Heart right ventricle (tissue), 16 donors: ENCODE measurements at regions of chr12 and their contacts with region 1.

Region 1: DNA sequence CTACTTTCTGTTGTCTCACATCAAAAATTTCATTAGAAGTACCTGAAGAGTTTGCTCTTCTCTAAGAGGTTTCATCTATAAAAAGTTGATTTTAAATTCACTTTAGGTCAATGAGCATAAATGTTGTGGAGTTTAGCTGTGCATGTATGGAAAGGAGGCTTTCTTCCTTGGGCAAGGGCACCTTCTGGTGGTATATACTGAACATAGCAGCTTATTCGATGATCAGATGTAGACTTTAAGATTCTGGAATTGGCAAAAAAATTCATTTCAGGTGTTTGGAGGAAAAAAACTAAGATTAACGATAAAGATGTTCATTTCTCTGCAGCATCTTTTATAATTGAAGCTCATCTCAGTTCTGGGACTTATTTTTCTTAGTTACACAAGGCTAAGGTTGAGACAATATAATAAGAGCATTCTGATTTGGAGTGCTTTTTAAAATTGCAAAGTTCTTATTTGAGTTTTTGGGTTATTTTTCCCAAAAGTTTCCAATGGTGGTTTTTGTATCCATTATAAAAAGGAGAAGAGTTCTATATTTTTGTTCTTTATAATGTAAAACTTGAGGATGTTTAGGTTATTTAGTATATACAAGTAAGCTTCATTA is 46.8 kb downstream of the TMEM117 start:
- DNase-seq: no peak
- ATAC-seq: peak in 5 of 8 donors; percentile 52 to 70 (median 64)
- H3K4me3 ChIP-seq: no peak overlapping the region
- H3K27ac ChIP-seq: no peak overlapping the region
- H3K4me1 ChIP-seq: peaks cover 0 to 11% (median 0%) of the 10 kb centered on the region in 9 donors
- H3K27me3 ChIP-seq: no peaks in the 10 kb centered on the region
- CTCF ChIP-seq: peak; percentile 34 to 90 (median 79)

Region 2: DNA sequence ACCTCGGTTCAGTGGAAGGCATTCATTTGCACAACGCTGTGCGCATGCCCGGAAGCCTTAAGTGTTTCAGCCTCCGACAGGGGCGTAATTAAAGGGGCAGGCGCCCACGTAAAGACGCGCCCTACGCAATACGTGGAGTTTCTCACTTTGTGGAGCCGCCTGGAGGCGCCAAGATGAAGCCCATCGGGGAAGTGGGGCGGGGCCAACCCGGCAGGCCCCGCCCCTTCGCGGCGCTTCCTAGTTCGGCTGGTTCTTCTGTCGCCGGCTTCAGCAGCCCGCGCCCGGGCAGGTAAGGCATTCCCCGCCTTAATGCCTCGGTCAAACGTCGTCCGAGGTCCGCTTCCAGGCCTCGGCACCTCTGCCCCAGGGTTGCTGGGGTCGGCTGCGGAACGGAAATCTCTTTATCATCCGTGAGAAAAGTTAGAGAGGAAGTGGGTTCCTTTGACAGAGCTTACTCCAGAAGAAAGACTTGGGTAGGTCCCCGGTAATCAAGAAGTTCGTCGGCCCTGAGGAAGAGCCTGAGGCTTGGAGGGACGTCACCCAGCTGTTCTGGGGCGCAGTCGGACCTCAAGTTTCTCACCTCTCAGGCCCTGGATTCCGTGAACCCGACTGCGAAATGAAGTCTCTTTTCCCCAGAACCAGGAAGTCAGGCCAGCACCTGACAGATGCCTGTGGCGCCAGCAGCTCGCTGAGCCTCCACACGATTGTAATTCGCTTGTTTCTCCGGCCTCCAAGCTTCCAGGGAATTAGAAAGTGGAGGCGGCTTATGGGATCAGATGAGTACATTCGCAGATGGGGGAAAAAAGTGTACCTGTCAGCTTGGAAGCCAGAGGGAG is 123.7 kb before region 1 on chr12 and contains the starts of genes IRAK4 and PUS7L:
- intact Hi-C with region 1: loop called in 2 of 10 experiments (anchors 5 kb)
- DNase-seq: peak; percentile 93 to 94
- ATAC-seq: peak; percentile 99 to 100 (median 100)
- H3K4me3 ChIP-seq: peak within 1 kb of the TSS; percentile 56 to 93 (median 78)
- H3K27ac ChIP-seq: peak within 1 kb of the TSS in 9 of 10 donors; percentile 76 to 94 (median 88)
- H3K4me1 ChIP-seq: peaks cover 4 to 52% (median 26%) of the 10 kb centered on the region in 9 donors
- H3K27me3 ChIP-seq: no peaks in the 10 kb centered on the region
- CTCF ChIP-seq: peak in 8 of 9 donors; percentile 29 to 71 (median 52)
- total RNA-seq, gene IRAK4: 3.6 to 8.1 (median 4.1) TPM
- total RNA-seq, gene PUS7L: 4.1 to 7.8 (median 5.2) TPM

Region 3: DNA sequence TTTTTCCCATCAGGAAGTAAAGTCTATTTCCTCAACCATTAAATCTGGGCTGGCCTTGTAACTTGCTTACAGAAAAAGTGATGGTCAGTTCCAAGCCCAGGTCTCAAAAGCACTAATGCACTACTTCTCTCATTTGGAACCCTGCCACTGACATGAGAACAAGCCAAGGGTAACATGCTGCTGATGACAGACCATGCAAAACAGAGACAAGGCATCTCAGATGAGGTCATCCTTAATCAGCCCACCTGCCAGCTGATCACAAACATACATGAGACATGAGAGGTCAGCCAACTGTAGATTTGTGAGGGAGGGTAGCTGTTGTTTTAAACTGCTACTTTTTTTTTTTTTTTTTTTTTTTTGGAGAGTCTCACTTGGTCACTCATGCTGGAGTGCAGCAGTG is 92.7 kb before region 1 on chr12:
- intact Hi-C with region 1: loop called in 1 of 10 experiments (anchors 10 kb)
- DNase-seq: peak in 1 of 2 donors; percentile 11
- ATAC-seq: peak in 3 of 8 donors; percentile 33 to 51 (median 38)
- H3K4me3 ChIP-seq: no peak overlapping the region
- H3K27ac ChIP-seq: no peak overlapping the region
- H3K4me1 ChIP-seq: peaks cover 0 to 7% (median 0%) of the 10 kb centered on the region in 9 donors
- H3K27me3 ChIP-seq: no peaks in the 10 kb centered on the region
- CTCF ChIP-seq: no peak

Region 4: DNA sequence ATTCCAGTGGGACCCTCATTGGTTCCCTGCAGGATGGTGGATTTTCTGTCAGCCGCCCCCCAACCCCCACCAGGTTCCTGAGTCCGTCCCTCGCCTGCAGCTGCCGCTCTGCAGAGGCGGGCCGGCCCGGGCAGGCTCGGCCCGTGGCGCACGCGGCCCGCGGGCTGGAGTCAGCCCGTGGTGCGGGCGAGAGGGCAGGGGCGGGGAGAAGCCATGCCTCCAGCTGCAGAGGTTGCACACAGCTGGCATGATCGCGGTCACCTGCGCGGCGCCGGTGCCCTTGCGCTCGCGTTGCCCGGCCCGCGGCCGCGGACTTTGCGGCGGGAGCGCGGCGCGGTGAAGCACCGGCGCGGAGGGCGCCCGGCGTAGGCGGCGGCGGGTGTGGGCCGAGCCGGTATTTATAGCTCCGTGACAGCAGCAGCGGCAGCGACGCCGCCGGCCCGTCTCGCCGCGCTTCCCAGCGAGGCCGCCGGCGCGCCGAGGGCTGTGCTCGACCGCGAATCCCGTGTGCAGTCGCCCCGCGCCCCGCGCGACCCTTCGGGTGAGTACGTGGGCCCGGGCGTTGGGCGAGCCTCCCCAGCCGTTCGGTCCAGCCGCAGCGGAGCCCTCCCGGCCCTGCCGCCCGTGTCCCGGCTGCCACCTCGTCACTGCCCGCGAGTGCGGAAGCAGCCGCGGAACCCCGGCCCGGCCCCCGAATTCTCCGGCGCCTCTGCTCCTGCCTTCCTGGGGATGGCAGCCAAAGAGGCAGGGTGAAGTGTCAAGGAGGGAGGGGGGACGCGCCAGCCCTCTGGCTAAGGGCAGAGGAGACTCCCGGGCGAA is 46.8 kb before region 1 on chr12 and contains the start of gene TMEM117:
- intact Hi-C with region 1: loop called in 1 of 10 experiments (anchors 5 kb)
- DNase-seq: peak; percentile 80 to 86
- ATAC-seq: peak; percentile 93 to 96 (median 94)
- H3K4me3 ChIP-seq: peak within 1 kb of the TSS; percentile 40 to 86 (median 77)
- H3K27ac ChIP-seq: peak within 1 kb of the TSS; percentile 93 to 98 (median 95)
- H3K4me1 ChIP-seq: peaks cover 0 to 28% (median 19%) of the 10 kb centered on the region in 9 donors
- H3K27me3 ChIP-seq: no peaks in the 10 kb centered on the region
- CTCF ChIP-seq: no peak
- total RNA-seq, gene TMEM117: 5.9 to 8.5 (median 7.1) TPM

Region 5: DNA sequence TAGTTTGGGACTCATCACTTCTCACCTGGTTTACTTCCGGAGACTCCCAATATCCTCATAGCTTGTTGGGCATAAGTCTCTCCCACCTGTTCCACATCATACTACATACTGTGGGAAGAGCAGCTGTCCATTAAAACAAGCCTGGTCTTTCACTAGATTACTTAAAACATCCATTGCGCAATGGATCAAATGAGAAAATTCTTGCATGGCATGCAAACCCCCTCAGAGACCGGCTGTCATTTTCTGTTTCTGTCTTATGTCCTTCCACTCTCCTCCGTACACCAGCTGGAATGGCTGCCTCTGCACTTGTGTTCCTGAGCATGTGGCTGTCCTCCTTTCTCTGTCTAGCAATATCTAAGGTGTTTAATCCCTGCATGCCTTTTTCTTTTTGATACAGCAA is 218.8 kb after region 1 on chr12:
- intact Hi-C with region 1: no loop called
- DNase-seq: no peak
- ATAC-seq: no peak
- H3K4me3 ChIP-seq: no peak overlapping the region
- H3K27ac ChIP-seq: no peak overlapping the region
- H3K4me1 ChIP-seq: peaks cover 0 to 4% (median 0%) of the 10 kb centered on the region in 9 donors
- H3K27me3 ChIP-seq: no peaks in the 10 kb centered on the region
- CTCF ChIP-seq: no peak